Activated naive CD4-positive, alpha-beta T cell treated with anti-CD3 and anti-CD28 coated beads for 36 hours (primary cell): ENCODE measurements at regions of chr17 and their contacts with region 1.

Region 1: DNA sequence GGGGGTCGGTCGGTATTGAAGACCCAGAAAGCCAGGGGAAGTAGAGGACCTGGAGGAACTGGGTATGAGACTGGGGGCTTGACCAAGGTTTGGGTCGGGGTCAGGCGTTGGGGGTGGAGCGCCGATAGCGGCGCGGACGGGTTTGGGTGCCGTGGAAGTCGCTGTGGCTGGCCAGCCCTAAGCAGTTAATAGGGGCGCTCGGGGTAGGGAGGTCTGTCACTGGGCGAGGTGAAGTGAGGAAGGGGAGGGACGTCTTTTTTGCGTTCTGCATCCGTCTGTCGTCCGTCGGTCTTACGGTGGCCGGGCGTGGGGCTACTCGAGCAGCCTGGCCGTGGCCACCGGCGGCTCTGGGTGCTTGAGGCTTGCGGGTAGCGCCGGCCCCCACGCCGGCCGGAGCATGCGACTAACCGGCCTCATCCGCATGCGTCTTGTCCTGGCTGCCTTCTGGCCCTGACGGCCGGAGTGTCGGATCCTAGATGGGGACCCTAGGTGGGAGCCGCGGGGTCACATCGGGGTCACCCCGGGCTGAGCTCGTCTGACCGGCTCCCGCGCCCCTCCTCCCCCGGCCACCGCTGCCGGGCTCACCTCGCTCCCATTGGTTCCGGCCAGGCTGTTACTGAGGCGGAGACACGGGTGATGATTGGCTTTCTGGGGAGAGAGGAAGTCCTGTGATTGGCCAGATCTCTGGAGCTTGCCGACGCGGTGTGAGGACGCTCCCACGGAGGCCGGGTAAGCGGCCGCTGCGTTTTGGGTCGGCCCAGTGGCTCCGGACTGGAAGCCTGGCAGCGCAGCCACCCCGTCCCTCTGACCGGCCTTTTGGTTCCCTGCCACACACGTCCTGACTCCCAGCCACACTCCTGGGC is 10.3 kb upstream of the TMEM88 start:
- DNase-seq: peak; percentile 90
- H3K4me3 Mint-ChIP-seq: peak overlapping the region; percentile 89
- H3K27ac Mint-ChIP-seq: peak overlapping the region; percentile 99
- H3K4me1 Mint-ChIP-seq: peaks cover 46% of the 10 kb centered on the region
- H3K27me3 Mint-ChIP-seq: no peaks in the 10 kb centered on the region

Region 2: DNA sequence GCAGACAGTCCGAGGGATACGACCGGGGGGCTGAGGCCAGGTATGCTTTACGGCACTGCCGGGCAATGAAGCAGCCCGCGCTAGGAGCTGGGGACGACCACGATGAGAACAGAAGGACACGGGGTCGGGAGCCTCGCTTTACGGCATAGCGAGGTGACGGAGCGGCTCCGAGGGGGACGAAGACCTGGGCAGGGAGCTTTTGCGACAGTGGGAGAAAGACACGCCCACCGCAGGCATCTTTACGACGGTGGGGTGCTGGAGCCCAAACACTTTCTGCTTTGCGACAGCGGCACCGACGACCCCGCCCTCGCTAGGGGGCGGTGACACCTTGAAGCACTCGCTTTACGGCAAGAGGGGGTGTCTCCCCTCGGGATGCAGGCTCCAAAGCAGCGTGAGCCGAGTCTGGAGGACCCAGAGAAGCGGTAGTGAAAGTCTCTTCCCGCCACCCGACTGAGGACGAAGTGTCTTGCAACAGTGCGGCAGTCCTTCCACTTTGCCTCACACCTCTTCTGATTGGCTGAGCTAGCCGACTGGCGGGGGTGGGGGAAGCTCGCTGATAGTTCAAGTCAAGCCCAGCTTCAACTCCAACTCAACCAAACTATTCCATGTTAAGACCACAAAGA is 515.0 kb before region 1 on chr17:
- CTCF ChIA-PET with region 1: no interaction called
- intact Hi-C with region 1: loop called (anchors 10 kb)
- DNase-seq: peak; percentile 98
- H3K4me3 Mint-ChIP-seq: peak overlapping the region; percentile 97
- H3K27ac Mint-ChIP-seq: peak overlapping the region; percentile 91
- H3K4me1 Mint-ChIP-seq: peaks cover 54% of the 10 kb centered on the region
- H3K27me3 Mint-ChIP-seq: no peaks in the 10 kb centered on the region

Region 3: DNA sequence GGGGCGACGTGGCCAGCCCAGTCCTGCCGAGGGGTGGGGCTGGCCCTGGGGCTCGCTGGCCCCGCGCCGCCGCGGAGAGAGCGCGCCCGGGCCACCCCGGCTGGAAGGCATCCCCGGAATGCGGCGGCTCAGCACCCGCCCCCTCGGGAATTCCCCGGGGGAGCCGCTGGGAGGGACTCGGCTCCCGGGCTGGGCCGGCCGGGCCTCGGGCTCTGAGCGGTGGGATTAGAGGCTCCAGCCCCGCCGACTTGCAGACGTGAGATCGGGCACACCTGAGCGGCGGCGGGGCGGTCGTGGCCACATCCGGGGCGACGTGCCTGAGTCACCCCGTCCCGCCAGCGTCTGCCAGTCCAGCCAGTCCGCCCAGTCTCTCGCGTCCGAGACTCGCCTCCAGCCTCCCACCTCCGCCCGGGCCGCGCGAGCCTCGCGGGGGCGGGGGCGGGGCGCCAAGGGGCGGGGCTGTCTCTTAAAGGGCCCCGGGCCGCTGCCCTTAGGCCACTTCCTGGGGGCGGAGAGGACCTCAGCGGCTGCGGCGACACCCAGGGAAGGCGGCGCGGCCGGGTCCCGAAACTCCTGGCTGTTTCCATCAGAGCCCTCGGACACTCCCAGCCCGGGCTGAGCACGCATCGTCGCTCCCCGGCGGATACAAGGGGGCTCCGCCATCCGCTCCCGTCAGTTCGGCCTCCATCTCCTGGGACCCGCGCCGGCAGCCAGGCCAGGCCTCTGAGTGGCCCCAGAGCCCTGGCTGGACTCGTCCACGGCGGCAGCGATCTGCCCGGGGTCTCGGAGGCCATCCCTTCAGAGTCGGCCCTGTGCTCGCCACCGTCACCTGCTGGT is 492.6 kb before region 1 on chr17 and contains the start of gene KCTD11:
- CTCF ChIA-PET with region 1: no interaction called
- intact Hi-C with region 1: no loop called
- DNase-seq: peak; percentile 76
- H3K4me3 Mint-ChIP-seq: peak within 1 kb of the TSS; percentile 62
- H3K27ac Mint-ChIP-seq: peak within 1 kb of the TSS; percentile 51
- H3K4me1 Mint-ChIP-seq: peaks cover 43% of the 10 kb centered on the region
- H3K27me3 Mint-ChIP-seq: no peaks in the 10 kb centered on the region
- total RNA-seq, gene KCTD11: 0.41 to 0.47 TPM

Region 4: GRCh38 chr17:7583253-7584109 is 261.0 kb before region 1 on chr17 and contains the start of gene MPDU1:
- CTCF ChIA-PET with region 1: no interaction called
- intact Hi-C with region 1: loop called (anchors 2 kb)
- DNase-seq: peak; percentile 96
- H3K4me3 Mint-ChIP-seq: peak within 1 kb of the TSS; percentile 95
- H3K27ac Mint-ChIP-seq: peak within 1 kb of the TSS; percentile 100
- H3K4me1 Mint-ChIP-seq: peaks cover 58% of the 10 kb centered on the region
- H3K27me3 Mint-ChIP-seq: no peaks in the 10 kb centered on the region
- total RNA-seq, gene MPDU1: 48.8 to 53.5 TPM

Region 5: GRCh38 chr17:7782237-7782636 is 62.3 kb before region 1 on chr17:
- CTCF ChIA-PET with region 1: no interaction called
- intact Hi-C with region 1: no loop called
- DNase-seq: no peak
- H3K4me3 Mint-ChIP-seq: no peak overlapping the region
- H3K27ac Mint-ChIP-seq: no peak overlapping the region
- H3K4me1 Mint-ChIP-seq: no peaks in the 10 kb centered on the region
- H3K27me3 Mint-ChIP-seq: peaks cover 2% of the 10 kb centered on the region

Region 6: GRCh38 chr17:7887482-7888183 is 43.1 kb after region 1 on chr17:
- CTCF ChIA-PET with region 1: no interaction called
- intact Hi-C with region 1: loop called (anchors 1 kb)
- DNase-seq: peak; percentile 96
- H3K4me3 Mint-ChIP-seq: no peak overlapping the region
- H3K27ac Mint-ChIP-seq: no peak overlapping the region
- H3K4me1 Mint-ChIP-seq: peaks cover 5% of the 10 kb centered on the region
- H3K27me3 Mint-ChIP-seq: no peaks in the 10 kb centered on the region

Region 7: DNA sequence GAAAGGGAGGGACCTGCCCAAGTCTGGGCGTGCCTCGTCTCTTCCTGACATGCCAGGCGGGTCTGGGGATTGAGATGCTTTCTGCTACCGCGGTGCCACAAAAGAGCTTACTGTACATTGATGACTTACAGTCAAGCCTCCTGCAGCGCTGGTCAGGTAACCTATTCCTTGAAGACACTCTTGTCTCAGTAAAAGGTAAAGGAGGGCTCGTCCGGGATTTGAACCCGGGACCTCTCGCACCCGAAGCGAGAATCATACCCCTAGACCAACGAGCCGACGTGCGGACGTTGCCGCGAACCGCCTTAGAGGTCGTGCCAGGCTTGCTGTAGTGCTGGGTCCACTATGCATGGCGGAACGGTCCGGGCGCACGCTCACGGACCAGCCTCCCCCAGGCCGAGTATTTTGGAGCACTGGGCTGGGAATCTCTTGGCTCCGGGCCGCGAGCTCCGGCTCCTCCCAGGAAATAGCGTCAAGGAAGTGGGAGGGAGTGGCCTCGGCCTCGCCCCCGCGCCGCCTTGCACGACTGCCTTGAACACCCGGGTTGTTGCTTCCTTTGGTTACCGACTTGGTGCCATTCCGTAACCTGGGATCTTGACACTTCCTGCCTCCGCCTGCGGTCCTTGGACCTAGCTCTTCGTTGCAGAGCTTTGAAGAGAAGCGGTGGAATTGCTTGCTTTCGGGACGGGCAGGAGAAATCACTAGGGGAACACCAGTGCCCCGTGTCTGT is 378.3 kb after region 1 on chr17:
- CTCF ChIA-PET with region 1: no interaction called
- intact Hi-C with region 1: loop called (anchors 1 kb)
- DNase-seq: peak; percentile 94
- H3K4me3 Mint-ChIP-seq: peak overlapping the region; percentile 96
- H3K27ac Mint-ChIP-seq: peak overlapping the region; percentile 96
- H3K4me1 Mint-ChIP-seq: peaks cover 37% of the 10 kb centered on the region
- H3K27me3 Mint-ChIP-seq: peaks cover 15% of the 10 kb centered on the region